Endothelial cell of umbilical vein (primary cell): ENCODE measurements at regions of chr11 and their contacts with region 1.

Region 1: GRCh38 chr11:83156150-83156995 is 558 bp upstream of the PCF11 start:
- DNase-seq: peak; percentile 100
- H3K4me3 ChIP-seq: peak overlapping the region; percentile 76 to 93 (median 83)
- H3K27ac ChIP-seq: peak overlapping the region; percentile 57
- H3K4me1 ChIP-seq: peaks cover 23% of the 10 kb centered on the region
- H3K27me3 ChIP-seq: no peaks in the 10 kb centered on the region
- CTCF ChIP-seq: no peak
- POLR2A ChIP-seq: no peak

Region 2: DNA sequence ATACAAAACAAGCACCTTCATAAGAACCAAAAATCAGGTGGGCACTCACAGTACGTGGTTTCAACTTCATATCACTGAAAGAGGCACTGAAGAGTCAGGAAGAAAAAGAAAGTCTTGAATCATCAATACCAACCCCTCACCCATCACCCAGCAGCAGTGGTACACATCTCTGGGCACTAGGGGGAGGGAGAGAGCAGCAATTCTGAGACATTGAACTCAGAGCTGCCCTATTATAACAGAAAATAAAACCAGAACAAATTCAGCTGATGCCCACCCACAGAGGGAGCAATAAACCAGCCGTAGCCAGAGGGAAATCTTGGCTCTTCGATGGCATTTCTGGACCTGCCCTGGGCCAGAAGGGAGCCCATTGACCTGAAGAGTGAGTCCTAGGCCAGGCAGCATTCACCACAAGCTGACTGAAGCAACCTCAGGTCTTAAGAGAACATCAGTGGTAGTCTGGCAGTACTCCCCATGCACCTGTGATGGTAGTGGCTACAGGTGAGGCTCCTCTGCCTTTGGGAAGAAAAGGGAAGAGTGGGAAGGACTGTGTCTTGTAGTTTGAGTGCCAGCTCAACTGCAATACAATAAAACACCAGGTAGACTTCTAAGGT is 380.5 kb before region 1 on chr11:
- CTCF ChIA-PET with region 1: interaction called, 4 read pairs
- POLR2A ChIA-PET with region 1: no interaction called
- dilution Hi-C with region 1: no loop called
- intact Hi-C with region 1: loop called (anchors 5 kb)
- DNase-seq: peak; percentile 85
- H3K4me3 ChIP-seq: no peak overlapping the region
- H3K27ac ChIP-seq: no peak overlapping the region
- H3K4me1 ChIP-seq: peaks cover 2% of the 10 kb centered on the region
- H3K27me3 ChIP-seq: no peaks in the 10 kb centered on the region
- CTCF ChIP-seq: peak; percentile 86 to 95
- POLR2A ChIP-seq: no peak

Region 3: DNA sequence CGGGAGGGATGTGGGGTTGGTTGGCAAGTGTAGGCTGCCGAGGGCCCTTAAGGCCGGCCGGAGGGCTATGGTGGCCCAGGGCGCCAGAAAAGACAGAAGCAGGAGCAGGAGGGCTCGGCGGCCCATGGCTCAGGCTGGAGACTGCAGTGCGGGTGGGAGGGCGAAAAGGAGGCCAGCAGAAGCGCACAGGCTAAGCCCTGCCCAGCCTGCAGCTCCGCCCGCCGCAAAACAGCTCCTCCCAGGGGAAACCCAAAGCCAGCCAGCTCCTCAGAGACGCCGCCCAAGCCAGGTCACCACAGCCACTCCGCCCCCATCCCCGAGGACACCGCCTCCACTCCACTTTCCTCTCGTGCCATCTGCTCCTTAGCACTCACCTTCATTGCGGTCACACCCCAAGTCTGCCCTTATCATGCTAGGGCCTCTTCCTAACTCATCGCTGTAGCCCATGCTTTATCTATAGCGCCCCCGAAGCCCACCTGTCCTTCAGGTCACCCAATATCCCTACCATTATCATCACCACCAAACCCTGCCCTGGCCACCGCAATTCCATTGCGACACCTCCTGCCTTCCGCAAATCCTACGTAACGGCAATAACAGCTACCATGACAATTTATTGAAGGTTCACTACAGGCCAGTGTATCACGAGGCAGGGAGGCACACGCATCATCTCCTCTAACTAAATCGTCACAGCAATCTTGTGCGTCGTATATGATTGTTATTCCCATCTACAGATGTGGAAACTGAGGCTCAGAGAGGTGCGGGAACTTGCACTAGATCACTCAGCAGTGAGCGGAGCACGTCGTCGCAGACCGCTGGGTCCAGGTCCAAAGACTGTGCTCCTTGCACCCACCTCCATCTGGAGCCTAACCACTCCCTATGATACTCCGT is 255.9 kb before region 1 on chr11 and contains the start of gene PRCP:
- CTCF ChIA-PET with region 1: interaction called, 14 read pairs
- POLR2A ChIA-PET with region 1: interaction called, 8 read pairs
- dilution Hi-C with region 1: no loop called
- intact Hi-C with region 1: loop called (anchors 1 kb)
- DNase-seq: peak; percentile 91
- H3K4me3 ChIP-seq: peak within 1 kb of the TSS; percentile 34 to 75 (median 50)
- H3K27ac ChIP-seq: peak within 1 kb of the TSS; percentile 52
- H3K4me1 ChIP-seq: peaks cover 32% of the 10 kb centered on the region
- H3K27me3 ChIP-seq: no peaks in the 10 kb centered on the region
- CTCF ChIP-seq: no peak
- POLR2A ChIP-seq: peak; percentile 96
- total RNA-seq, gene PRCP: 149 and 170 TPM in 2 replicates

Region 4: DNA sequence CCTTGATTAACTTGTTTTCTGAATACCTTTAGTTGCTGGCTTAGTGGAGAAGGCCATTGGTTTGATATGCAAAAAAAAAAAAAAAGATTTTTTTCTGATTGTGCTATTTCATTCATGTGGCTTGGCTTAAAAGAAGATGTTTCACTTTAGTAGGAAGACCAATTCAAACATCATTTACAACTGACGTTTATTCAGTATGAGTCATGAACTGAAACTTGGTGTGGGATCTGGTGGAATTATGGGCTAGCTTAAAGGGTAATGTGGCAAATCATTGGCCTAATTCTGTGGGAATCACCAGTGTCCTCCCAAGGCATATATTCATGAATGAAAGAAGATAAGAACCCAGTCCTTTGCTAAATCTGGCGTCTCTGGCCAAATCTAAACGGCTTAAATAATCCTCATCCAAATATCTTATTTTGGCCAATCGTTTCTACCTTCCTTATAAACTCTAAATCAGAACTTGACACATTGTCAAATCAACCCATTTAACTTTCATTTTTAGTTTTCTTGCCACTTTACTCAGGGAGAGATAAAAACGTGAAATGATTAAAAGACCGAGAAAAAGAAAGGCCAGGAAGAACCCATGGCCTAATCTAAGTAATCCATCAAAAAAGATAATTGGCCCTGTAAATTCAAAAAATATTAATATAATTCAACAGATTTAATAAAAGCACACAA is 177.8 kb before region 1 on chr11:
- CTCF ChIA-PET with region 1: no interaction called
- POLR2A ChIA-PET with region 1: interaction called, 3 read pairs
- dilution Hi-C with region 1: no loop called
- intact Hi-C with region 1: loop called (anchors 1 kb)
- DNase-seq: no peak
- H3K4me3 ChIP-seq: no peak overlapping the region
- H3K27ac ChIP-seq: no peak overlapping the region
- H3K4me1 ChIP-seq: peaks cover 22% of the 10 kb centered on the region
- H3K27me3 ChIP-seq: no peaks in the 10 kb centered on the region
- CTCF ChIP-seq: no peak
- POLR2A ChIP-seq: no peak

Region 5: DNA sequence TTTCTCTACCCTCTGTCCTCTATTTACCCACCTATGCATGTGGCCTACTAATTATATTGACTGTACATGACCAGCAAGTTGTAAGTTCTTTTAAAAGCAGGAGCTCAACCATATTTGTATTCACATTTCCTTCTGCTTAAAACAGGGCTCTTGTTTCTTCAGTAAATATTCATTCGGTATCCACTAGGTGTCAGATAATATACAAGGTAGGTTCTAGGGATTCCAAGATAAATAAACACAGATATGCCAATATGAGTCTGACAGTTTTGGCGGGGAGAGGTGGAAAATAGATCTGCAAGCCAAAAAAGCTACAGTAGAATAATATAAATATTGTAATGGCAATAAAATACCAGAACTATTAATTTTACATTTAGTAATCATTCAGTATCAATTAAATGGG is 69.3 kb before region 1 on chr11:
- CTCF ChIA-PET with region 1: interaction called, 3 read pairs
- POLR2A ChIA-PET with region 1: interaction called, 4 read pairs
- dilution Hi-C with region 1: no loop called
- intact Hi-C with region 1: loop called (anchors 5 kb)
- DNase-seq: peak; percentile 28
- H3K4me3 ChIP-seq: no peak overlapping the region
- H3K27ac ChIP-seq: no peak overlapping the region
- H3K4me1 ChIP-seq: no peaks in the 10 kb centered on the region
- H3K27me3 ChIP-seq: no peaks in the 10 kb centered on the region
- CTCF ChIP-seq: no peak
- POLR2A ChIP-seq: no peak

Region 6: DNA sequence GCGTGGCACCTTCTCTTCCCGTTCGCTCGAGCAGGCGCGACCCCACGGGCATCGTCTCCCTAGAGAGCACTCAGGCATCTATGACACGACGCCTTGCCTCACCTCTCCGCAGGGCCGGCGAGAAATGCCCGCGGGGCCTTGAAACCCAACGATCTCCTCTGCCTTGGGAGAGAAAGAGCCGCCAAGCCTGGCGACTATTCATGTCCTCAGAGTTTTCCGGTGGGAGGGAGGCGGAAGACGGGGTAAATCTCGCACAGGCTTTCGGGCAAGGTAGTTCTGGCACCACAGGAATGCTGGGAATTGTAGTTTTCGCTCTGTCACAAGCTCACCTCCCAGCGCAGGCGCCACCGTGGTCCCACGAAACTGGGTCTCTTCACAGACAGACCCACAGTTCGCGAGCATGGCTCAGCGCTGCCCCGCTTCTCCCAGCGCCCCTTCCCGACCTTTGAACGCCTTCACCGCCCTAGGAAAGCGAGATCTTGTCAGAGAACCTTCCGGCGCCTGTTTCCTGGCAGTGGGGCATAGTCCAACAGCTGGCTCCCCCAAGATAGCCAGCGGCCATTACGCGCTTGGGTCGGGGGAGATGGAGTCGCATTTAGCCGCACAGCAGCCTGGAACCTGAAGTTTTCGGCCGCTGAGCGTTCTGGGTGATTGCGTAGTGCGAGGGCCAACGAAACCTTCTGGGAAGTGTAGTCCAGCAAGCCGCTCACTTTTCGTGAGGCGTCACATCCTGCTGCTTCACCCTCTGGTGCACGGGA is 129.6 kb after region 1 on chr11 and contains the start of gene CCDC90B:
- CTCF ChIA-PET with region 1: no interaction called
- POLR2A ChIA-PET with region 1: interaction called, 5 read pairs
- dilution Hi-C with region 1: no loop called
- intact Hi-C with region 1: loop called (anchors 2 kb)
- DNase-seq: peak; percentile 98
- H3K4me3 ChIP-seq: peak within 1 kb of the TSS; percentile 47 to 100 (median 85)
- H3K27ac ChIP-seq: peak within 1 kb of the TSS; percentile 86
- H3K4me1 ChIP-seq: peaks cover 9% of the 10 kb centered on the region
- H3K27me3 ChIP-seq: peaks cover 0 to under 1% of the 10 kb centered on the region in 2 experiments
- CTCF ChIP-seq: peak; percentile 17 to 24
- POLR2A ChIP-seq: peak; percentile 92
- total RNA-seq, gene CCDC90B: 45.8 and 49.6 TPM in 2 replicates